ENCODE measurements at regions of chr3 and their contacts with region 1.

Region 1: GRCh38 chr3:47781685-47782445 is at the start of gene SMARCC1:
- DNase-seq: peak; percentile 99
- ATAC-seq: peak; percentile 87
- H3K4me3 ChIP-seq: peak within 1 kb of the TSS; percentile 82
- H3K27ac ChIP-seq: peak within 1 kb of the TSS; percentile 82
- H3K4me1 ChIP-seq: peaks cover 20% of the 10 kb centered on the region
- H3K27me3 ChIP-seq: no peaks in the 10 kb centered on the region
- CTCF ChIP-seq: no peak
- total RNA-seq, gene SMARCC1: 43.1 and 53.0 TPM in 2 replicates

Region 2: DNA sequence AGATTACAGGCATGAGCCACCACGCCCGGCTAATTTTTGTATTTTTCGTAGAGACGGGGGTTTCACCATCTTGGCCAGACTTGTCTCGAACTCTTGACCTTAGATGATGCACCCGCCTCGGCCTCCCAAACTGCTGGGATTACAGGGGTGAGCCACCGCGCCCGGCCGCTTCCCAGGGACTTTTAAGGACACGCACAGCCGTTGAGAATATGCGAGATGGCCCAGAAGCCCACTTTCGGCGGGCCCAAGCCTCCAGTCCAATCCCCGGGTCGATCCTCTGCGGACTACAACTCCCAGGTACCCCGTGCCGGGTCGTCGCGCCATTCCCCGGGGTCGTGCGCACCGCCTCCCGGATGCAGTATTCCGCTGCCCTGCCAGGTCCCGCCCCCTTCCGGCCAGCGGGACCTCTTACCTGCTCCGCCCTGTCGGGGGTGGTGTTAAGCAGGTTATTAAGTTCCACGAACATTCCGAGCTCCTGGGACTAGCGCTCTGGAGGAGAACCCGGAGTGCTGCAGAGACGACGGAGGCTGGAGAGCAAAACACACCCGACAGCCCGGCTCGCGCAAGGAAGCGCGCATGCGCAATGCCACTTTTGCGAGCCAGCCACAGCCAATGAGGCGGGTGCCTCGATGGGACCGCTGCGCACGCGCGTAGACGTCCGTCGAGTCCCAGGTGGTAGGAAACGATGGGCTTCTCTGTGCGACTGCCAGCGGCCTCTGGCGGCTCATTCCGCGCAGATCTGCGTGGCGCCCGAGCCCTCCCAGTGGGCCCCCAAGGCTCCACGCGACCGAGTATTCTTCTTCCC is 268.5 kb before region 1 on chr3 and contains the start of gene ELP6:
- CTCF ChIA-PET with region 1: no interaction called
- POLR2A ChIA-PET with region 1: no interaction called
- intact Hi-C with region 1: loop called (anchors 2 kb)
- DNase-seq: peak; percentile 96
- ATAC-seq: peak; percentile 98
- H3K4me3 ChIP-seq: peak within 1 kb of the TSS; percentile 80
- H3K27ac ChIP-seq: peak within 1 kb of the TSS; percentile 88
- H3K4me1 ChIP-seq: peaks cover 11% of the 10 kb centered on the region
- H3K27me3 ChIP-seq: no peaks in the 10 kb centered on the region
- CTCF ChIP-seq: peak; percentile 58
- total RNA-seq, gene ELP6: 64.5 and 97.9 TPM in 2 replicates

Region 3: DNA sequence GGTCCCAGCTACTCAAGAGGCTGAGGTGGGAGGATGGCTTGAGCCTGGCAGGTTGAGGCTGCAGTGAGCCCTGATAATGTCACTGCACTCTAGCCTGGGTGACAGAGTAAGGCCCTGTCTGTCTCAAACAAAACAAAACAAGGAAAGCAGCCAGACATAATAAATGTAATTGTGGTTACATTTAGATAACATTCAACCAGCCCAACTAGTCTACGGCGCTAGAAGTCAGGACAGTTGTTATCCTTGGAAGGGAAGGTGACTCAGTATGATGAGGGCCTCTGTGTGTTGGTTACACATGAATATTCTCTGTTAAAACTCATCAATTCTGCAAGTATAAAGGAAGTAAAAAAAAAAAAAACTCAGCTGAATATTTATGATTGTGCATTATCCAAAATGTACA is 176.2 kb before region 1 on chr3:
- CTCF ChIA-PET with region 1: no interaction called
- POLR2A ChIA-PET with region 1: no interaction called
- intact Hi-C with region 1: loop called (anchors 2 kb)
- DNase-seq: peak; percentile 49
- ATAC-seq: peak; percentile 40
- H3K4me3 ChIP-seq: no peak overlapping the region
- H3K27ac ChIP-seq: no peak overlapping the region
- H3K4me1 ChIP-seq: peaks cover 5% of the 10 kb centered on the region; the same call in 1 of the 2 replicates
- H3K27me3 ChIP-seq: no peaks in the 10 kb centered on the region
- CTCF ChIP-seq: no peak

Region 4: DNA sequence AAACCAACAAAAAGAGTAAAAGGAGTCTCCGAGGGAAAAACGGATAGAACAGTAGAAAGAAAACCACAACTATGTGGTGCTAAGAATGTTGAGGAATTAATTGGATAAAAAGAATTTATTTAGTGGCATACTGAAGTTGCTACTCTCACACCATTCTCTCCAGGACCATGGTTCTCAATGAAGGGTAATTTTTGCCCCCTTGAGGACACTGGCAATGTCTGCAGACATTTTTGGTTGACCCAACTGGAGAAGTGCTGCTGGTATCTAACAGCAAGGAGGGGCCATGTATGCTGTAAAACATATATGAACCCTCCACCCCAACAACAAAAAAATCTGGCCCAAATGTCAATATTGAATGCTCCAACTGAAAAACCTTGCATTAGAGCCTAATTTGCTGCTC is 117.3 kb before region 1 on chr3:
- CTCF ChIA-PET with region 1: no interaction called
- POLR2A ChIA-PET with region 1: interaction called, 7 read pairs
- intact Hi-C with region 1: loop called (anchors 10 kb)
- DNase-seq: peak; percentile 43
- ATAC-seq: no peak
- H3K4me3 ChIP-seq: no peak overlapping the region
- H3K27ac ChIP-seq: no peak overlapping the region
- H3K4me1 ChIP-seq: peaks cover 26% of the 10 kb centered on the region
- H3K27me3 ChIP-seq: no peaks in the 10 kb centered on the region
- CTCF ChIP-seq: peak; percentile 50; the same call in 1 of the 2 replicates

Region 5: DNA sequence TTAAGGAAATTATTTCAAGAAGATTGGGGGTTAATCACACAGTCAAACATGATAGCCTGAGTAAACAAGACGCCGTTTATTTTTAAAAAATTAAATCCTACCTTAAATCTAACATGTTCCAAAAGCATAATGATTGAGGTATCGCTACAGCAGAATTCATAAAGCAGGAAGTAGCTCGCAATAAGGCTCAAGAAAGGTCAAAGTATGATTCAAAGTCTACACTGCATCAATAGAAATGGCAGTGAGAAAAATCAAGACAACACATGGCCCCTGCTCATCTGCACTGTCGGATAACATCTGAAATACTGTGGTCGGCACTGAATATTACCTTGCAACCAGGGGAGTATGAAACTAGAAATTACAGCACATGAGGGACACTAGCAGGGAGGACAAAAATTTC is 93.4 kb before region 1 on chr3:
- CTCF ChIA-PET with region 1: no interaction called
- POLR2A ChIA-PET with region 1: no interaction called
- intact Hi-C with region 1: no loop called
- DNase-seq: no peak
- ATAC-seq: no peak
- H3K4me3 ChIP-seq: no peak overlapping the region
- H3K27ac ChIP-seq: no peak overlapping the region
- H3K4me1 ChIP-seq: peaks cover 7% of the 10 kb centered on the region; the same call in 1 of the 2 replicates
- H3K27me3 ChIP-seq: no peaks in the 10 kb centered on the region
- CTCF ChIP-seq: no peak

Region 6: GRCh38 chr3:47731061-47731460 is 50.8 kb before region 1 on chr3:
- CTCF ChIA-PET with region 1: no interaction called
- POLR2A ChIA-PET with region 1: interaction called, 12 read pairs
- intact Hi-C with region 1: no loop called
- DNase-seq: no peak
- ATAC-seq: no peak
- H3K4me3 ChIP-seq: no peak overlapping the region
- H3K27ac ChIP-seq: no peak overlapping the region
- H3K4me1 ChIP-seq: peaks cover 7% of the 10 kb centered on the region; the same call in 1 of the 2 replicates
- H3K27me3 ChIP-seq: no peaks in the 10 kb centered on the region
- CTCF ChIP-seq: no peak

Region 7: GRCh38 chr3:47856669-47857068 is 74.8 kb after region 1 on chr3:
- CTCF ChIA-PET with region 1: no interaction called
- POLR2A ChIA-PET with region 1: no interaction called
- intact Hi-C with region 1: no loop called
- DNase-seq: no peak
- ATAC-seq: no peak
- H3K4me3 ChIP-seq: no peak overlapping the region
- H3K27ac ChIP-seq: no peak overlapping the region
- H3K4me1 ChIP-seq: no peaks in the 10 kb centered on the region
- H3K27me3 ChIP-seq: no peaks in the 10 kb centered on the region
- CTCF ChIP-seq: no peak

Region 8: DNA sequence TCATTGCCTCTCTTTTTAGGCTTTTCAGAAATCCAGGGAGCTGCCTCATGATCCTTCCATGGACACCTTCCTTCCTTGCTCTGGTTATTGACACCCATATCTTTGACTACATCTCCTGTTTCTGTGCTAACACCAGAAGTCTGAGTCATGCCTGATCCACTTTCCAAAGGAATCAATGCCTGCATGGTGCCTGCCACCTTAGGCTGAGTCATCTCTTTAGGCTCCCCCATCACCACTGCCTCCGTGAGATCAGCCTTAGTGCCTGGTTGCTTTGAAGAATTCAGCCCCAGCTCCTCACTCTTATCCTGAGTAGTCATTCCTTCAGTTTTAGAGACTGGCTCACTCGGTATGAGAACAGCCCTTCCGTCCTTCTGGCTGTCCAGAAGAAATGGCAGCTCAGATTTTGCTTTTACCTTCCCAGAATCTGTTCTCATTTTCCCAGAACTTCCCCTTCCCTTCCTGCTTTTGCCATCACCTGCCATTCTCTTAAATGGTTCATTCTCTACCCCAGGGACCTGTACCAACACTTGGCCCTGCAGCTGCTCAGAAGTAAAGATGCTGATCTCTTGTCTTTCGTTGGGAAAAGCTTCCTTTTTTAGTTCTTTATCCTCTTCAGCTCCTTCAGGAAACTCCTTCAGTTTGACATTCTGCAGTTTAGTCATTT is 129.0 kb after region 1 on chr3:
- CTCF ChIA-PET with region 1: no interaction called
- POLR2A ChIA-PET with region 1: no interaction called
- intact Hi-C with region 1: no loop called
- DNase-seq: peak; percentile 95
- ATAC-seq: peak; percentile 98
- H3K4me3 ChIP-seq: peak overlapping the region; percentile 11; the same call in 1 of the 2 replicates
- H3K27ac ChIP-seq: peak overlapping the region; percentile 63
- H3K4me1 ChIP-seq: peaks cover 19% of the 10 kb centered on the region
- H3K27me3 ChIP-seq: no peaks in the 10 kb centered on the region
- CTCF ChIP-seq: no peak

Region 9: GRCh38 chr3:47984097-47984728 is 202.3 kb after region 1 on chr3:
- CTCF ChIA-PET with region 1: no interaction called
- POLR2A ChIA-PET with region 1: interaction called, 17 read pairs
- intact Hi-C with region 1: no loop called
- DNase-seq: peak; percentile 90
- ATAC-seq: peak; percentile 80
- H3K4me3 ChIP-seq: no peak overlapping the region
- H3K27ac ChIP-seq: peak overlapping the region; percentile 68
- H3K4me1 ChIP-seq: peaks cover 23% of the 10 kb centered on the region
- H3K27me3 ChIP-seq: no peaks in the 10 kb centered on the region
- CTCF ChIP-seq: no peak

Measured in PC-3 (cell line).